Activated naive CD4-positive, alpha-beta T cell treated with anti-CD3 and anti-CD28 coated beads for 36 hours (primary cell): ENCODE measurements at regions of chr6 and their contacts with region 1.

Region 1: GRCh38 chr6:13427801-13428582 is 59.4 kb downstream of the GFOD1 start:
- DNase-seq: peak; percentile 90
- H3K4me3 Mint-ChIP-seq: peak overlapping the region; percentile 53
- H3K27ac Mint-ChIP-seq: peak overlapping the region; percentile 85
- H3K4me1 Mint-ChIP-seq: peaks cover 68% of the 10 kb centered on the region
- H3K27me3 Mint-ChIP-seq: no peaks in the 10 kb centered on the region

Region 2: GRCh38 chr6:12661432-12662089 is 766.4 kb before region 1 on chr6:
- CTCF ChIA-PET with region 1: no interaction called
- intact Hi-C with region 1: no loop called
- DNase-seq: no peak
- H3K4me3 Mint-ChIP-seq: no peak overlapping the region
- H3K27ac Mint-ChIP-seq: no peak overlapping the region
- H3K4me1 Mint-ChIP-seq: no peaks in the 10 kb centered on the region
- H3K27me3 Mint-ChIP-seq: peaks cover 3% of the 10 kb centered on the region

Region 3: DNA sequence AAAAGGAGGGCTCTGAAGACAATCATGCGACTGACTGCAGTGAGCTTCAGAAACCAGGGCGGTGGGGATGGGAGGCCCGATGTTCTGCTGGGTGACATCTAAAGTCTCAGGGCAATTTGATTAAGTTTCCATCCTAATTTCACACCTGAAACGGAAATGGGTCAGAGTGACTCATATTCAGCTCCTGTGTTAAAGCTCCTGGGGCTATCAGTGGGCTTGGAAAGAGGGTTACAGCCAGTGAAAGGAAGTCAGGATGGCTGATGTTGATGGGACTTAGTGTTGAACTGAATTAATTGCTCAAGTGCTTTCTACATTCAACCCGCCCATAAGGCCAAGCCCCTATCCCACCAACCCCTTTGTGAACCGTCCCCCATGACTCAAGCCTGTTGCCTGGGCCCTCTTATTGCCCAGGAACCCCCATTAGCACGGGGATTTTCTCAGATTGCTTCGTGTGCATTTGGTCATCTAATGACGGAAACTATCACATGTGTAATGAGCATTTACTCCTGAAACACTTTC is 52.6 kb before region 1 on chr6:
- CTCF ChIA-PET with region 1: interaction called, 3 read pairs
- intact Hi-C with region 1: loop called (anchors 1 kb)
- DNase-seq: peak; percentile 78
- H3K4me3 Mint-ChIP-seq: no peak overlapping the region
- H3K27ac Mint-ChIP-seq: peak overlapping the region; percentile 21
- H3K4me1 Mint-ChIP-seq: peaks cover 23% of the 10 kb centered on the region
- H3K27me3 Mint-ChIP-seq: no peaks in the 10 kb centered on the region

Region 4: DNA sequence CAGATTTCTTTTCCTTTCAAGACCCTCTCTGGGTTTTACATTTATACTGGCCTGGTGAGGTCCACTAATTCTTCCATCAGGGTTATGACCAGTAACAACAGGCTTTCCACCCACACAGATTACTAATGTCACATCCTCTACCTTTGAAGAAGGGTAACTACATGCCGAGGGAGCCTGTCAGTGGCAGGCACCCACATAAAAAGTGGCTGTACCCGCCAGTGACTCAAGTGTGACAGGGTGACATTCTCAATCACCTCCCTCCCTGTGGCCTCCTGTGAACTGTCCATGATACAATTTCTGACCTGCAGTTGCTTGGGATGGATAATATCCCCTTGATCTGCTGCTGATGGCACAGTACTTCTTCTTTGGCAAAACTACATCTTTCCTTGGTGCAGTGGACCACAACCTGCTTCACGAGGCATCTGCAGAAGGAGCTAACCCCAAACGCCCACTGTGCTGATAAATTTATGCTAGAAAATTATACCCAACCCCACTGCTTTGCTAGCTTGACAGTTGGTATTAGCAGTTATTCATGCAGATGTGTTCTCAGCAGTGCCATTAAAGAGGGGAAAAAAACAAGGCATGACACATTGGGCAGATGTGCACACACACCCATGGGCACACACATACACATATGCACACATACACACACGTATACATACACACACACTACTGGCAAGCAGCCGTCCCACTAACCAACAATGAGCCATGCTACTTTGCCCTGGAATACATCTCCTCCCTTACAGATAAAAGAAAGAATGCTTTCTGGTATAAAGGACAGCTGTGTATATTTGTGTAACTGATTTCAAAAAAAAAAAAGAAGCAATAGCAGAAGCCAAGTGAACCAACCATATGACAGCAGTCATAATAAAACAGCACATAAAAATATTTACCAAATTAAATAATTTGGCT is 38.6 kb after region 1 on chr6:
- CTCF ChIA-PET with region 1: interaction called, 3 read pairs
- intact Hi-C with region 1: loop called (anchors 5 kb)
- DNase-seq: peak; percentile 73
- H3K4me3 Mint-ChIP-seq: no peak overlapping the region
- H3K27ac Mint-ChIP-seq: no peak overlapping the region
- H3K4me1 Mint-ChIP-seq: peaks cover 45% of the 10 kb centered on the region
- H3K27me3 Mint-ChIP-seq: no peaks in the 10 kb centered on the region

Region 5: DNA sequence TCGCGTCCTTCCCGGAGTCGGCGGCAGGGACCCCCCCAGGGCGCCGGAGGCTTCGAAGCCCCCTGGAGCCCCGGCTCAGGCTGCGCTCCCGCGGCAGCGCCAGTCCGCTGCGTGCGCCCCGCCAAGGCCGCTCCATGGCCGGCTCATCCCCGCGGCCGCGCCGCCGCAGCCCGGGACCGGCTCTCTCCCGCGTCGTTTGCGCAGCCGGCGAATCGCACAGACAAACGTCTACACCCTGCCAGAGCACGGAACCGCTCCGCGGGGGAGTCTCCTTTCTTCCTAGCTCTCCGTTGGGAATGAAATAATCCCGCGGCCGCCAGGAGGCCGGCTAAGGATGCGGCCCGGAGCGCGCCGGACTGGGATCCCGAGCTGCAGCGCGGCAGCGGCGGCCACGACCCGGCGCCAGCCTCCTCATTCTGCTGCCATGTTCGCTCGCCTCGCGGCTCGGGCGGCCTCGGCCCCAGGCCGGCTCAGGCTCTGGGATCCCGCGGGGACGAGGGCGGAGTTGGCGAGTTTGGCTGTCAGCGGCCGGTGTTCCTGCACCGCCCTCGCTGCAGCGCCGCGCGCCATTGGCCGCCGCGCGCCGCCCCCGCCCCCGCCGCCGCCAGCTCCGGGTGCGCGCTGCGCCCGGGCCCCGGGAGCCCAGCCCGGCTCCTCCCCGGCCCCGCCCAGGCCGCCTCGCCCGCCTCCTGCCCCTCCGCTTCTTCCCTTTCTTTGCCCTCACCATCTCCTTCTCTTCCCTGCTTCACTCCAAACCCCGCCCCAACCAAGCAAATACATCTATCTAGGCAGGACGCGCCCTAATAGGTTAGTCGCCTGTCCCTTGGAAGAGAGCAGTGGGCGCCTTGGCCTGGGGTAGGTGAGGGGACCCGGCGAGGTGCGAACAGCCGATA is 59.4 kb after region 1 on chr6 and contains the start of gene GFOD1:
- CTCF ChIA-PET with region 1: interaction called, 5 read pairs
- intact Hi-C with region 1: loop called (anchors 1 kb)
- DNase-seq: peak; percentile 80
- H3K4me3 Mint-ChIP-seq: peak within 1 kb of the TSS; percentile 92
- H3K27ac Mint-ChIP-seq: peak within 1 kb of the TSS; percentile 47
- H3K4me1 Mint-ChIP-seq: peaks cover 24% of the 10 kb centered on the region
- H3K27me3 Mint-ChIP-seq: peaks cover 2% of the 10 kb centered on the region
- total RNA-seq, gene GFOD1: 3.7 to 4.2 TPM

Region 6: DNA sequence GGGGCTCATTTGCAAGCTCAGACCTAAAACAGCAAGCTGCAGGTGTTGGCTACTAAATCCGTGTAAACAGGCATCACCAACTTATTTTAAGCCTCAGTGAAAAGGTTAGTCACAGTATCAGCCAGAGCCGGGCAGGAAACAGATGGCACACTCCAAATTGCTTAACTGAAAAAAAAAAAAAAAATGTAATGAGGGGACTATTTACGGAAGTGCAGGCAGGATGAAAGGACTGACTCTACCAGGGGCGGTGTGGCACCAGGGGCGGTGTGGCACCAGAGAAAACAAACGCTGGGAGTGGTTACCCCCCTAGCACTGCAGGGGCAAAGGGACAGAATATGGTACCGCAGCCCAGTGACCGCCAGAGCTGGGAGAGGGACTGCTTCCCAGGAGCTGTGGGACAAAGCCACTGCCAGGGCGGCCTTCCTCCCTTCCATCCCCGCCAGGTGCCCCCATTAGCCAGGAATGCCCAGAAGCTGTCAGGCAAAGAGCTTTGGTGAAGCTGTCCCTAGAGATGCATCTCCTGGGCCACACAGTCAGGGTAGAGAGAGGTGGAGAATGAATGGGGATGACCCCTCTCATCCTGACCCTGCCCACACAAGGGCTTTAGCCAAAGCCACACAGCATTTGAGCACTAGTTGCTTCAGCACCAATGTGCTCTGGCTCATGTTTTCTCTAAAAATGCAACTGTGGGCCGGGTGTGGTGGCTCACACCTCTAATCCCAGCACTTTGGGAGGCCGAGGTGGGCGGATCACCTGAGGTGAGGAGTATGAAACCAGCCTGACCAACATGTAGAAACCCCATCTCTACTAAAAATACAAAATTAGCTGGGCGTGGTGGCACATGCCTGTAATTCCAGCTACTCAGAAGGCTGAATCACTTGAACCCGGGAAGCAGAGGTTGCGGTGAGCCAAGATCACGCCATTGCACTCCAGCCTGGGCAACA is 99.0 kb after region 1 on chr6:
- CTCF ChIA-PET with region 1: interaction called, 4 read pairs
- intact Hi-C with region 1: loop called (anchors 2 kb)
- DNase-seq: peak; percentile 60
- H3K4me3 Mint-ChIP-seq: no peak overlapping the region
- H3K27ac Mint-ChIP-seq: no peak overlapping the region
- H3K4me1 Mint-ChIP-seq: peaks cover 11% of the 10 kb centered on the region
- H3K27me3 Mint-ChIP-seq: no peaks in the 10 kb centered on the region